MCF 10A (cell line): ENCODE measurements at regions of chr3 and their contacts with region 1.

Region 1: GRCh38 chr3:45760878-45761711 is 35.2 kb downstream of the SLC6A20 start:
- DNase-seq: peak; percentile 62
- H3K4me3 Mint-ChIP-seq: no peak overlapping the region
- H3K27ac Mint-ChIP-seq: no peak overlapping the region
- H3K4me1 Mint-ChIP-seq: peaks cover 6% of the 10 kb centered on the region
- H3K27me3 Mint-ChIP-seq: no peaks in the 10 kb centered on the region
- CTCF ChIP-seq: peak; percentile 75

Region 2: DNA sequence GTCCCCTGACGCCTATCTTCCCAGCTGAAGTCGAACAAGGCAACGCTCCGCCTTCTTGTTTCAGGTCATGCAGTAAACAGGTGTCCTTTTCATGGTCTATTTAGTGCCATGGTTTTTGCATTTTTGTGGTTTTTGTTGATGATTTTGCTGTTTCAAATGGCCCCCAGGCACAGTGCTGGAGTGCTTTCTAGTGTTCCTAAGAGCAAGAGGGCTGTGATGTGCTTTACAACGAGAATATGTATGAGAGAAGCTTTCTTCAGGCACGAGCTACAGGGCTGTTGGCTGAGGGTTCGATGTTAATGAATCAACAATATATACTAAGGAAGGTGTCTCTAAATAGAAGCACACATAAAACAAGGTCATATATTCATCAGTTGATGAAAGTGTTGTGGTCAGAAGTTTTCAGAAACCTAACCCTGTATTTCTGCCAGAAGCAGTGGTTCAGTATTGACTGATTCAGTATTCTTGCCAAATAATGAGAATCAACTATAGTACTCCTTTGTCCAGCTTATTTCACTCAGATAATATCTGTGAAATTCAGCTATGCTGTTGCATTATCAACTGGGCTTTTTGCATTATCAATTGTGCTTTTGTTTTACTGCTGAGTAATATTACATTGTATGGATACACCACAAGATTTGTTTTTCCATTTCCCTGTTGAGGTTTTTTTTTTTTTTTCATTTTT is 148.0 kb before region 1 on chr3:
- CTCF ChIA-PET with region 1: no interaction called
- POLR2A ChIA-PET with region 1: no interaction called
- intact Hi-C with region 1: no loop called
- DNase-seq: no peak
- H3K4me3 Mint-ChIP-seq: no peak overlapping the region
- H3K27ac Mint-ChIP-seq: peak overlapping the region; percentile 50
- H3K4me1 Mint-ChIP-seq: peaks cover 23% of the 10 kb centered on the region
- H3K27me3 Mint-ChIP-seq: no peaks in the 10 kb centered on the region
- CTCF ChIP-seq: no peak

Region 3: DNA sequence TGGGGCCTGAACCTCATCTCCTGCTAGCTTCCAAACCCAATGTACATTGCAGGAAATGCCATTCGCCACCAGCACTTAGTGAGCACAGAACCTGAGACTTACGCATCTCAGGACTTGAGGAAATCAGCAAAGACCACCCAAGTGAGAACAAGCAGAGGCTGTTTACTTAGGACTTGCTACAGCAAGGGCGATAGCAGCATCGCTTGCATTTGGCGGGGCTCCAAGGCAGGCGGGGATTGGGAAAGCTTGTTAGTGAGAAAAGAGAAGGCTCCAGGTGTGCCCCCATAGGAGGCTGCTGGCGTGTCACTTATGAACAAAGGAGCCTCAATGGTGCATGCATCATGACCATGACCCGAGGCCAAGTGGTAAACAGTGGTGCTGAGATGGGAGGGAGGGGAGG is 15.5 kb after region 1 on chr3:
- CTCF ChIA-PET with region 1: interaction called, 20 read pairs
- POLR2A ChIA-PET with region 1: no interaction called
- intact Hi-C with region 1: no loop called
- DNase-seq: no peak
- H3K4me3 Mint-ChIP-seq: no peak overlapping the region
- H3K27ac Mint-ChIP-seq: no peak overlapping the region
- H3K4me1 Mint-ChIP-seq: no peaks in the 10 kb centered on the region
- H3K27me3 Mint-ChIP-seq: peaks cover 48% of the 10 kb centered on the region
- CTCF ChIP-seq: no peak

Region 4: GRCh38 chr3:45826321-45826720 is 65.2 kb after region 1 on chr3:
- CTCF ChIA-PET with region 1: interaction called, 92 read pairs
- POLR2A ChIA-PET with region 1: interaction called, 3 read pairs
- intact Hi-C with region 1: no loop called
- DNase-seq: peak; percentile 11
- H3K4me3 Mint-ChIP-seq: no peak overlapping the region
- H3K27ac Mint-ChIP-seq: no peak overlapping the region
- H3K4me1 Mint-ChIP-seq: no peaks in the 10 kb centered on the region
- H3K27me3 Mint-ChIP-seq: no peaks in the 10 kb centered on the region
- CTCF ChIP-seq: no peak

Region 5: GRCh38 chr3:45906681-45907407 is 145.7 kb after region 1 on chr3:
- CTCF ChIA-PET with region 1: interaction called, 5 read pairs
- POLR2A ChIA-PET with region 1: no interaction called
- intact Hi-C with region 1: loop called (anchors 1 kb)
- DNase-seq: peak; percentile 60
- H3K4me3 Mint-ChIP-seq: no peak overlapping the region
- H3K27ac Mint-ChIP-seq: no peak overlapping the region
- H3K4me1 Mint-ChIP-seq: peaks cover 5% of the 10 kb centered on the region
- H3K27me3 Mint-ChIP-seq: peaks cover 10% of the 10 kb centered on the region
- CTCF ChIP-seq: peak; percentile 54

Region 6: GRCh38 chr3:46378426-46378942 is 617.4 kb after region 1 on chr3:
- CTCF ChIA-PET with region 1: interaction called, 3 read pairs
- POLR2A ChIA-PET with region 1: no interaction called
- intact Hi-C with region 1: loop called (anchors 10 kb)
- DNase-seq: peak; percentile 73
- H3K4me3 Mint-ChIP-seq: no peak overlapping the region
- H3K27ac Mint-ChIP-seq: peak overlapping the region; percentile 4
- H3K4me1 Mint-ChIP-seq: peaks cover 16% of the 10 kb centered on the region
- H3K27me3 Mint-ChIP-seq: peaks cover 33% of the 10 kb centered on the region
- CTCF ChIP-seq: peak; percentile 73